Left cardiac atrium (tissue), 4 donors: ENCODE measurements at regions of chr5 and their contacts with region 1.

Region 1: GRCh38 chr5:42950440-42951292 is 89.5 kb downstream of the ANXA2R start:
- DNase-seq: peak; percentile 86
- ATAC-seq: peak; percentile 76 to 90

Region 2: DNA sequence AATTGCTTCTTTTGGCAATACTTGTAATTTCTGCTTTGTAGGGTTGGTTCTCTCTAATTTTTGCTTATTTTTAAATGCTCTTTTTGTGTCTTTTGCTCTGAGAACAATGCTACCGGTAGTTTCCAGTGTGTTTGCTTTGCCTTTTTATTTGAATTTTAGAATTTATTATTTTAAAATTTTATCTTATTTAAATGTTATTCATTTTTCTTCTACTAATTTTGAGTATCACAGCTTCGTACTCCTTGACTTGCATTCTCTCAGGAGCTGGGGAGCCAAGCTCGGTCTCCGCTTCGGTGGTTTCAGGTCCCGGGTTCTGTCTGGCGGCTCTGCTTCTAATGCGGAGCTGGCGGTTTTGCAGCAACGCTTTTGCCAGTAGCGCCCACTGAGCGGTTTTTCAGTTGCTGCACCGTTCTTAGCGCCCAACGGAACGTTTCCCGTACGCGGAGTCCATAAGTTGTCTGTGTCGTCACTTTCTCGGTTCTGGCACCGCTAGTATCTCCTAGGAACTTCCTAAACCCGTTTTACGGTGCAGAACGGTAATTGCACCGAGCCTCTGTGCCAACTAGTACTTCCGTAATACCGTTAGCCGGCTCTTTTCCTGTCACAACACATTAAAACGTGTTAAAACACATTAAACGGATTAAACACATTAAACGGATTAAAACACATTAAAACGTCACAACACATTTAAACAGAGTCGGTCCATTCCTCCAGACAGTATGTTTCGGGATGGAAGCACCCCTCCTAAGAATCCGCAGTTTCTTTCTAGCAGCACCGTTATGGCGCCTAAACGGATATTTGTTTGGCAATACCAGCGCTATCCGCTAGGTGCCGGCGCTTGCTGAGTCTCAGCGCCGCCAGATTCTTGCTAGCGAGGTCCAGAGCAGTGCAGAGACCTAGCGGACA is 43.8 kb after region 1 on chr5:
- intact Hi-C with region 1: loop called in 1 of 2 experiments (anchors 5 kb)
- DNase-seq: peak; percentile 90
- ATAC-seq: peak; percentile 75 to 78